CD8-positive, alpha-beta T cell (primary cell): ENCODE measurements at regions of chr4 and their contacts with region 1.

Region 1: DNA sequence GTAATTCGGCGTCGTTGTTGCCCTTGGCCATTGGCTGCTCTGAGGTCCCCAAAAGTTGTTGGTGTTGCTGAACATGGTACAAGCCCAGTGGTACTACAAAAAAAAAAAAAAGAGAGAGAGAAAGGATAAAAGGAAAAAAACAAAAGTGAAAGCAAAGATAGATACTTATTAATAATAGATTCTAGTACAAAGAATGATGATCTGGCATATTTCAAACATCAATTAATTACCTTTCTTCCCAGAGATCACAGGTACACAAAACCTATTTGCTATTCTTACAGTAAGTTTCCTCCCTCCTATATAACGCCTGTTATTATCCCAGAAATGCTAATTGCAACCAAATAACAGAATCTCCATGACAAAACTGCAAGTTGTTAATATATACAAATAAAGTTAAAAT is 188.9 kb downstream of the FBXW7 start:
- DNase-seq: no peak
- ATAC-seq: no peak
- H3K4me3 ChIP-seq: no peak overlapping the region
- H3K4me3 Mint-ChIP-seq: no peak overlapping the region
- H3K27ac ChIP-seq: no peak overlapping the region
- H3K27ac Mint-ChIP-seq: no peak overlapping the region
- H3K4me1 ChIP-seq: peaks cover 2% of the 10 kb centered on the region
- H3K4me1 Mint-ChIP-seq: peaks cover 7% of the 10 kb centered on the region
- H3K27me3 ChIP-seq: no peaks in the 10 kb centered on the region
- H3K27me3 Mint-ChIP-seq: no peaks in the 10 kb centered on the region
- CTCF ChIP-seq: no peak

Region 2: GRCh38 chr4:152310262-152310661 is 36.7 kb before region 1 on chr4:
- CTCF ChIA-PET with region 1: no interaction called
- POLR2A ChIA-PET with region 1: no interaction called
- intact Hi-C with region 1: loop called in 1 of 2 experiments (anchors 1 kb)
- DNase-seq: no peak
- ATAC-seq: no peak
- H3K4me3 ChIP-seq: no peak overlapping the region
- H3K4me3 Mint-ChIP-seq: no peak overlapping the region
- H3K27ac ChIP-seq: no peak overlapping the region
- H3K27ac Mint-ChIP-seq: peak overlapping the region; percentile 49
- H3K4me1 ChIP-seq: no peaks in the 10 kb centered on the region
- H3K4me1 Mint-ChIP-seq: no peaks in the 10 kb centered on the region
- H3K27me3 ChIP-seq: no peaks in the 10 kb centered on the region
- H3K27me3 Mint-ChIP-seq: no peaks in the 10 kb centered on the region
- CTCF ChIP-seq: no peak

Region 3: GRCh38 chr4:152850377-152850776 is 503.4 kb after region 1 on chr4:
- CTCF ChIA-PET with region 1: no interaction called
- POLR2A ChIA-PET with region 1: no interaction called
- intact Hi-C with region 1: no loop called
- DNase-seq: peak in 7 of 9 experiments; percentile 18 to 57 (median 33)
- ATAC-seq: peak; percentile 69
- H3K4me3 ChIP-seq: no peak overlapping the region
- H3K4me3 Mint-ChIP-seq: no peak overlapping the region
- H3K27ac ChIP-seq: no peak overlapping the region
- H3K27ac Mint-ChIP-seq: no peak overlapping the region
- H3K4me1 ChIP-seq: peaks cover 4% of the 10 kb centered on the region
- H3K4me1 Mint-ChIP-seq: peaks cover 24% of the 10 kb centered on the region
- H3K27me3 ChIP-seq: no peaks in the 10 kb centered on the region
- H3K27me3 Mint-ChIP-seq: no peaks in the 10 kb centered on the region
- CTCF ChIP-seq: no peak